Psoas muscle (tissue), 8 donors: ENCODE measurements at regions of chr6 and their contacts with region 1.

Region 1: DNA sequence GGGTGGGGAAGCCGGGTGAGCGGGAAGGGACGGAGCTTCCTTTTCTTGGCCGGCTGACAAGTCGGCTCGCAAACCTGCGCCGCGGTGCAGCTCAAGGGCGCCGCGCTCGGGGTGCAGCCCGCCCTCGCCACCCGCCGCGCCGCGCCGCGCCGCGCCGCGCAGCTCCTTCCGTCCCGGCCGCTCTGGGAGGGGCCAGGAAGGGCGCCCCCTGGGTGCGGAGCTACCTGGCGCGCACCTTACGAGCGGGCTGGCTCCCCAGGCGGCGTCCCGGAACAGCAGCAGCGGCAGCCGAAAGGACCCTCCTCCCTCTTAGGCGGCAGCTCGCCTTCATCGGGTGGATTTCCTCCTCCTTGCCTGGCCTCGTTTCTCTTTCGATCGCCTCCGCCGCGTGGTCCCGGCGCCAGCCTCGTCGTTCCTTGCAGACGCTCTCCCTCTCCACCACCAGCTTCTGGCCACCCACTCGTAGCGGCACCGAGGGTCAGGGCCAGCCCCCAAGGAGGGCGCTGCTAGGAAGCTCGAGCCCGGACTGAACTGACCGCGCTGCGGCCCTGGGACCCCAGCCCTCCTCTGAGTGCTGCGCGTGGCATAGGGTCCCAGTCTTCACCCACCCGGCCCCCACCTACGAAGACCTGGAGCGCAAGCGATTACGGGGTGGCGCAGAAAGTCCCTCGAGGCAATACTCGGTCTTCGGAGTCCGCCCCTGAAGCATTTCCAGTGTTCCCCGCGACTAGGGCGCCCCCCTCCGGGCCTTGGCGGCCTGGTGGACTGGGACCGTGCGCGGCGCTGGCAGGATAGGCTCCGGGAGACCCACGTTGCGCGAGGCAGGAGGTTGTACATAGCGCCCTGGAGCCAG is at the start of gene MAP3K5:
- DNase-seq: peak; percentile 93 to 94
- ATAC-seq: peak; percentile 91 to 93 (median 92)
- H3K4me3 ChIP-seq: peak within 1 kb of the TSS; percentile 96
- H3K27ac ChIP-seq: peak within 1 kb of the TSS; percentile 95
- H3K4me1 ChIP-seq: peaks cover 10% of the 10 kb centered on the region
- H3K27me3 ChIP-seq: no peaks in the 10 kb centered on the region
- CTCF ChIP-seq: peak; percentile 70
- total RNA-seq, gene MAP3K5: 2.2 to 8.3 (median 7.0) TPM

Region 2: GRCh38 chr6:136582711-136583471 is 209.7 kb before region 1 on chr6:
- intact Hi-C with region 1: loop called (anchors 2 to 5 kb)
- DNase-seq: no peak
- ATAC-seq: peak in 2 of 4 donors; percentile 55 to 77
- H3K4me3 ChIP-seq: peak overlapping the region; percentile 16
- H3K27ac ChIP-seq: peak overlapping the region; percentile 60
- H3K4me1 ChIP-seq: peaks cover 25% of the 10 kb centered on the region
- H3K27me3 ChIP-seq: no peaks in the 10 kb centered on the region
- CTCF ChIP-seq: peak; percentile 65

Region 3: DNA sequence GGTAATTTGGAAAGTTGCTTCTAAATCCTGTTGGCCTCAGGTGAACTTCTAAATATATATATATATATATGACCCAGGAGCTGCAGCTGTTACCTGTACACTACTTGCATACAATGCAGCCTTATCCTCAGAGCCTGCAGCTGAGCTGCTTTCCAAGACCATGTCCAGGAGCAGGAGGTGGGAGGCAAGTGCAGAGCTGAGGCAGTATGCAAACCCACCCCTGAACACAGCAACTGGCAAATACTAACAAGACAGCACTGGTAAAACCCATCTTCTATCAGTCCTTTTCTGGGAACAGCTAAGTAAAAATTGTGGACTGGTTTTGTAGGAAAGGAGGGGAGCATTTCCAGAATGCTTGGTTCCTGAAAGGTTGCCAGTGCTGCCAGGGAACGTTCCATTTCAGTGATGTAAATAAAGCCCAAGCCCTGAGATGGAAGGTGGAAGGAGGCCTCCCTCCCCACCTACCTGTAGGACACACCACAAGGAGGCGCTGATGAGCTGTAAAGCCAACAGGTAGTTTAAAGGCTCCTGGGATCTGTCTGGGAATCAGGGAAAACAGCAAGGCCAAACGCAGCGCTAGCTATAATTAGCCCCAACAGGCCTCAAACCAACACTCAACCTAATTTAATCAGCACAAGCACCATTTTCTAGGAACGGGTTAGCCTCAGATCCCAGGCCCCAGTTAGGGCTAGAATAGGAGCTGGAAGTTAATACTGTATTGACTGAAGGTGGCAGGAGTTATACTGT is 148.6 kb before region 1 on chr6:
- intact Hi-C with region 1: loop called (anchors 1 to 2 kb)
- DNase-seq: peak; percentile 81 to 88
- ATAC-seq: peak; percentile 84 to 96 (median 90)
- H3K4me3 ChIP-seq: no peak overlapping the region
- H3K27ac ChIP-seq: peak overlapping the region; percentile 25
- H3K4me1 ChIP-seq: peaks cover 12% of the 10 kb centered on the region
- H3K27me3 ChIP-seq: no peaks in the 10 kb centered on the region
- CTCF ChIP-seq: peak; percentile 87